ENCODE measurements at regions of chr17 and their contacts with region 1.

Region 1: DNA sequence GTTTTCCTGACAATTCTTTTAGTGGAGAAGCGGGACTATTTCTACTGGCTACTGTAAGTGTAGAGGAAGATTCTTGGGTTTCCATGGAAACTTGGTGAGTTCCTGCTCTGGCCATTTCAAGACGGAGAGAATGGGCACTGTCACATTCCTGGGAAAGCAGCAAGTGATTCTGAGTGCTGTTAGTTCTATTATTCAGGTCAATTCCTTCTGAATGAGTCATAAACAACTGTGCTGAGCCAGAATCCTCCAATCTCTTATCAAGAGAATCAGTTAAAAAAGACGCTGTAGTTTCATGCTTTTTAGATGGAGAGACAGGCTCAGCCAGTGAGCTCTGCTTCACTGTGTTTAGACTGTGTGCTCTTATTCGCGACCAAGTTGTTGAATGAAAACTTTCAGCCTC is 19.6 kb downstream of the AKAP10 start:
- DNase-seq: no peak
- H3K4me3 Mint-ChIP-seq: no peak overlapping the region
- H3K27ac Mint-ChIP-seq: peak overlapping the region; percentile 61
- H3K4me1 Mint-ChIP-seq: peaks cover 30% of the 10 kb centered on the region
- H3K27me3 Mint-ChIP-seq: no peaks in the 10 kb centered on the region

Region 2: DNA sequence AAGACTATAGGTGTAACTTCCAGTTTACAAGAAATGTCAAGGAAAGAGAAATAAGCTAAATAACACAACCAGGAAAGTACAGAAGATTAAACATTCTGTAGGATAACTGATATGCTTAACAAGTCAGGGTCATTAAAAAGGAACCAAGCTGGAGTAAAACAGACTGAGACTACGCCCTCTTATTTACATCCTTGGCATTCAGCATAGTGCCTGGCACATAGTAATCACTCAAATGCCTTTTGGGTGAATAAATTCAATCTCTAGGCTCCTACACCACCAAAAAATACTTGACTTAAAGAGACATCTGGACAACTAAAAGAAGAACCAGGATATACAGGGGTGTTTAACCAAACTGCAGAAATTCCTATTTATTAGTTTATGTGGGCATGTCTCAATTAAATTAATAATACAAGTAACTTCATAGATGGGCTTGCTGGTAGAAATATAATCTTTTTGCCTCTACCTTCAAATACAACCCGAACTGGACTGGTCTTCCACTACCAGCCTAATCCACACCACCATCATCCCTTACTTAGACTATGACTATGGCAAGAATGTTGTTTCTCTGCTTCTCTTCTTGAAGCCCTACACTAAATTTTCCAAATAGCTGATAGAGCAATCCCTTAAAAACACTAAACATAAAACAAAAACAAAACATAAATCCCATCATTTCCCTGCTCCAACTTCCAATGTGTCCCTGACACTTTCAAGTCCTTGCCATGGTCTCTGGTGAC is 42.6 kb before region 1 on chr17:
- intact Hi-C with region 1: loop called (anchors 2 kb)
- DNase-seq: no peak
- H3K4me3 Mint-ChIP-seq: no peak overlapping the region
- H3K27ac Mint-ChIP-seq: peak overlapping the region; percentile 20
- H3K4me1 Mint-ChIP-seq: peaks cover 7% of the 10 kb centered on the region
- H3K27me3 Mint-ChIP-seq: no peaks in the 10 kb centered on the region

Region 3: DNA sequence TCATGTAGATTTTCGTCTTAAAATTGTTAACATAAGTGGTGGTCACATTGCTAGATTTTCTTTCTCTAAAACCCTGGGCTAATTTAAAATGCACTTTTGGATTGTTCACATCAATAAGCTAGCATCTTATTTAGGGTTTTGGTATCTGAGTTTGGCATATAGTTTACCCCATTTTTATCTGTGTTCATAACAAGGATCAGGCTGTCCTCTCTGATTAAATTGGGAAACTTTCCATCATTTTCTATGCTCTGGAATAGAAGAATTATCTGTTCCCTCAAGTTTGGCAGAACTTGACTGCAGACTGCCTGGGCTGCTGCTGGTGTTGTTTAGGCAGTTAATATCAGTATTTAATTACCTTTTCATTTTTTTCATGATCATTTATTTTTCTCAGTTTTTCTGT is 52.9 kb after region 1 on chr17:
- intact Hi-C with region 1: no loop called
- DNase-seq: no peak
- H3K4me3 Mint-ChIP-seq: peak overlapping the region; percentile 64
- H3K27ac Mint-ChIP-seq: no peak overlapping the region
- H3K4me1 Mint-ChIP-seq: peaks cover 15% of the 10 kb centered on the region
- H3K27me3 Mint-ChIP-seq: peaks cover 57% of the 10 kb centered on the region